Transverse colon (tissue), 4 donors: ENCODE measurements at regions of chr16 and their contacts with region 1.

Region 1: GRCh38 chr16:57576429-57576870 is 34.0 kb downstream of the ADGRG5 start:
- DNase-seq: peak; percentile 81
- H3K4me3 ChIP-seq: no peak overlapping the region
- H3K27ac ChIP-seq: no peak overlapping the region
- H3K4me1 ChIP-seq: peaks cover 0 to 4% (median 0%) of the 10 kb centered on the region in 4 donors
- H3K27me3 ChIP-seq: no peaks in the 10 kb centered on the region
- CTCF ChIP-seq: peak; percentile 85 to 93 (median 91)
- EP300 ChIP-seq: no peak
- POLR2A ChIP-seq: no peak

Region 2: GRCh38 chr16:57609541-57610401 is 33.3 kb after region 1 on chr16:
- in situ Hi-C with region 1: no loop called
- intact Hi-C with region 1: no loop called
- DNase-seq: peak; percentile 56
- H3K4me3 ChIP-seq: no peak overlapping the region
- H3K27ac ChIP-seq: peak overlapping the region; percentile 8 to 47 (median 30)
- H3K4me1 ChIP-seq: peaks cover 0 to 20% (median 12%) of the 10 kb centered on the region in 4 donors
- H3K27me3 ChIP-seq: no peaks in the 10 kb centered on the region
- CTCF ChIP-seq: no peak
- EP300 ChIP-seq: no peak
- POLR2A ChIP-seq: no peak

Region 3: DNA sequence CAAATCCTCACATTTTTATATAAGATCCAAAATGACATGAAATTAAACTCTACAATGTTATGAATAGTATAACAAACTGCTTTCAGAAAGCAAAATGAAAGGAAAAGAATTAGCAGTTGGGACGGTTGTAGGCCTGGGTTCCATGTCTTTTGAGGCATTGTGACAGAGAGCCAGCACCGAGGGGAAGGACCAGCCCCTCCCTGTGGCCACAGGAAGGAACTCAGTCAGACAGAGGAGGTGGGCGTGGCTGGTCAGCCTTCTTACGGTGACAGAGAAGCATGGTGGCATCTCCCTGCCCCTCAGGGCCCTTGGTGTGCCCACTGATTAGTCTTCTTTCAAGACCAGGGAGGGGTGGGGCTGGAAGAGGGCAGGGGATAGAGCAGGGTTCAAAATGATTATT is 418.3 kb after region 1 on chr16:
- in situ Hi-C with region 1: no loop called
- intact Hi-C with region 1: loop called (anchors 10 kb)
- DNase-seq: peak; percentile 51
- H3K4me3 ChIP-seq: no peak overlapping the region
- H3K27ac ChIP-seq: no peak overlapping the region
- H3K4me1 ChIP-seq: peaks cover 0 to 27% (median 9%) of the 10 kb centered on the region in 4 donors
- H3K27me3 ChIP-seq: no peaks in the 10 kb centered on the region
- CTCF ChIP-seq: peak; percentile 6 to 32 (median 20)
- EP300 ChIP-seq: no peak
- POLR2A ChIP-seq: no peak